Heart right ventricle (tissue), 16 donors: ENCODE measurements at regions of chr12 and their contacts with region 1.

Region 1: DNA sequence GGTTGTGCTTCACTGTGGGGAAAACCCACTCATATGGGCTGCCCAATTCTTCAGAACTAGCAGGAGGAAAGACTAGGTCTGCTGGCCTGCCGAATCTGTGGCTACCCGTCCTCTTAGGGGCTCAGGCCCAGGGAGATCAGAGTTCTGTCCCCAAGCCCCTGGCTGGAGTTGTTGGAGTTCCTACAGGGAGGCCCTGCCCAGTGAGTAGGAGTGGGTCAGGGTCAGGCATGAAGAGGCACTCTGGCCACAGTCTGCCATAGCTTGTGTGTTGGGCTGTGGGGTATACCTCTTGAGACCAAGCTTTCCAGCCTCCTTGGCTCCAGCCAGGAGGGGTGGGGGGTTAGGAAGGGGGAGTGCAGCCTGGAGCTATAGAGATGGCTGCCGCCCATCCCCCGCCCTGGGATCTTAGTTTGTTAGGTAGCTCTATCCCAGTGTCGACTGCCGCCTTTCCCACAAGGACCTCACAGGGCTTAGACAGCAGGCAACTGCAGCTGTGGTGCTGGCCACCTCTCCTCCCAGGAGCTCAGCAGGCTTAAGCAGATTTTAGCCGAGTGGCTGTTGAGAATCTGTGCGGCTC is 216.4 kb downstream of the PLCZ1 start:
- DNase-seq: no peak
- ATAC-seq: peak in 1 of 8 donors; percentile 47
- H3K4me3 ChIP-seq: no peak overlapping the region
- H3K27ac ChIP-seq: no peak overlapping the region
- H3K4me1 ChIP-seq: no peaks in the 10 kb centered on the region
- H3K27me3 ChIP-seq: no peaks in the 10 kb centered on the region
- CTCF ChIP-seq: no peak

Region 2: DNA sequence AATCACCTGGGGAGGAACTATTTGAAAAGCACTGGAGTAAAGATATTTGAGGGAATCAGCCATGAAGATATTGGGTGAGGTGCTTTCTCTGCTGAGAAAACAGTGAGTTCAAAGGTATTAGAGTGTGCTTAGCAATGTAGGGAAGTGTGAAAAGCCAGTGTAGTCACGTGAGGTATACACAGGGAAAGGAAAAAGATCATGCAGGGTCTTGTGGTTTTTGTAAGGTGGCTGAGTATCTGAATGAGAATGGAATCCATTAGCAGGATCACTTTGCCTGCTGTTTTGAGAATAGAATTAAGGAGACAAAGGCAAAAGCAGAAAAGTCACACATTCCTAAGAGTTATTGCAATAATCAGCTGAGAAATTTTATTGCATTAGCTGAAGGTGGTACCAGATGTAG is 67.0 kb before region 1 on chr12:
- intact Hi-C with region 1: loop called in 1 of 10 experiments (anchors 2 kb)
- DNase-seq: no peak
- ATAC-seq: no peak
- H3K4me3 ChIP-seq: no peak overlapping the region
- H3K27ac ChIP-seq: no peak overlapping the region
- H3K4me1 ChIP-seq: no peaks in the 10 kb centered on the region
- H3K27me3 ChIP-seq: no peaks in the 10 kb centered on the region
- CTCF ChIP-seq: no peak